ENCODE measurements at regions of chr2 and their contacts with region 1.

Region 1: DNA sequence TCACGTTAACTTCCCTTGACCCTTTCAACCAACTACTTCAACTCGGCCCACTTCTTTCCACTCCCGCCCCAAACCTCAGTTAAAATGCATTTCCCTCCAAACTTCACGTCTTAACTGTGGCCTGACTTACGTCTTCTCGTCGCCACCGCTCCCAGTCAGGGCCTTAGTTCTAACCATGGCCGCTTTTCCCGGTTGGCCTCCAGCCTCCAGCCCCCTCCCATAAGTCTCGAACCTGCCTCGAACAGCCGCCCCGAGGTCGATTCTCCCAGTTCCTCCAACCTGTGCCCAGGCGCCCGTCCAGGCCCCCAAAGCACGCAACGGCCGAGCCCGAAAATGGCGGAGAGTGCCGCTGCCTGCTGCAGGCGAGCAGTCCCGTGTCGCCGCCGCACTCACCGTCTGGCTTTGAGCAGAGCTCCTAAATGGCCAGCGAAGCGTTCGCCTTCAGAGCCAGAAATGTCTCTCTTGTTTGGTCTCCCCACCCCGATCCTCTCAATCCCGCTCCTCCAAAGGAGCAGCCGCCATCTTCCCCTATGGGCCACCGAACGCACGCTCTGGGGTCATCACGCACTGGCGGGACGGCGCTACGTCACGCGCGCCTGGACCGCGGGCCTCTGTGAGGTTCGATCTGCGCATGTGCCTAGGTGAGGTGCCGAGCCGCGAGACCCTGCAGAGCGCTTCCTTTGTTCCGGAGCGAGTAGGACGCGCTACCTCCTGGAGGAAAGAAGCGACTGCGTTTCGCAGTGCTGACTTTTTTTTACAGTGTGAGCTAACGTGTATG is at the start of gene WDR33:
- DNase-seq: peak; percentile 97
- ATAC-seq: peak; percentile 98
- H3K4me3 Mint-ChIP-seq: peak within 1 kb of the TSS; percentile 91
- H3K27ac Mint-ChIP-seq: peak within 1 kb of the TSS; percentile 99
- H3K4me1 Mint-ChIP-seq: peaks cover 45% of the 10 kb centered on the region
- H3K27me3 Mint-ChIP-seq: peaks cover 2% of the 10 kb centered on the region
- total RNA-seq, gene WDR33: 64.3 to 68.3 TPM

Region 2: DNA sequence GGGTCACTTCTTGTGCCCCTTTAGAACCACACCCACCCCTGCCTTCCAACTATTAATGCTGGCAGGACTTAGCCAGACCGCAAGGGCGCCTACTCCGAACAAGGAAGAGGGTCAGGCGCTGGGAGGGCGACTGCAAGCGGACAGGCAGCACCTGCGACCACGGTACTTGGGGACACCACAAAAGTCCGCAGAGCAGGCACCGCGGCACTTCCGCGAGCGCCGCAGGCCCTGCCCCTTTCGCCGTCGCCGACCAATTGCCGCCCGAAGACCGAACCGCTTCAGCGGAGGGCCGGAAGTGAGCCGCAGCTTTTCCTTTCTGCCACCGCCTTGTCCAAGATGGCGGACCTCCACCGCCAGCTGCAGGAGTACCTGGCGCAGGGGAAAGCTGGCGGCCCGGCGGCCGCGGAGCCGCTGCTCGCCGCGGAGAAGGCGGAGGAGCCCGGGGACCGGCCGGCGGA is 109.6 kb before region 1 on chr2 and contains the start of gene SFT2D3:
- CTCF ChIA-PET with region 1: interaction called, 7 read pairs
- POLR2A ChIA-PET with region 1: interaction called, 11 read pairs
- DNase-seq: peak; percentile 93
- ATAC-seq: peak; percentile 83
- H3K4me3 Mint-ChIP-seq: peak within 1 kb of the TSS; percentile 84
- H3K27ac Mint-ChIP-seq: peak within 1 kb of the TSS; percentile 95
- H3K4me1 Mint-ChIP-seq: peaks cover 41% of the 10 kb centered on the region
- H3K27me3 Mint-ChIP-seq: no peaks in the 10 kb centered on the region
- total RNA-seq, gene SFT2D3: 4.8 to 5.5 TPM

Region 3: DNA sequence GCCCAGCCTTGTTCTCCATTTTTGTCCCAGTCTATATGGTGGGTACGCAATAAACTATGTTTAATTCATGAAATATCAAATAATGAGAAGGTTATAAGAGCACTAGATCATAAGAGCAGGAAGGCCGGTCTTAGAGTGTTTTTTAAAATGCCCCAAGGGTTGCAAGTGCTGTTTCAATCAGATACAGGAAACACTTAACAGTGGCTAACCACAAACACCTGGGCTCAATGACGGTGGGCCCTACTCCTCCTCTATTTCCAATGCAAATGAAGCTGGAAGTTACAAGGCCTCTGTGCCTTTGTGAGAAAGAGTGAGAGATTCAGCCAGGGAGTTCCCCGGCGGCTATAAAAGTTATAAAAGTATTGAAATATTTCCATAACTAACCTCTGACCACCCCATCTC is 19.0 kb after region 1 on chr2:
- CTCF ChIA-PET with region 1: interaction called, 3 read pairs
- POLR2A ChIA-PET with region 1: interaction called, 21 read pairs
- DNase-seq: peak; percentile 84
- ATAC-seq: peak; percentile 94
- H3K4me3 Mint-ChIP-seq: peak overlapping the region; percentile 20
- H3K27ac Mint-ChIP-seq: peak overlapping the region; percentile 86
- H3K4me1 Mint-ChIP-seq: peaks cover 42% of the 10 kb centered on the region
- H3K27me3 Mint-ChIP-seq: no peaks in the 10 kb centered on the region